Activated CD4-positive, alpha-beta T cell treated with anti-CD3 and anti-CD28 coated beads for 36 hours (primary cell): ENCODE measurements at regions of chr1 and their contacts with region 1.

Region 1: GRCh38 chr1:110645821-110646735 is 28.7 kb downstream of the KCNA3 start:
- DNase-seq: no peak
- ATAC-seq: peak; percentile 52
- H3K4me3 Mint-ChIP-seq: peak overlapping the region; percentile 25
- H3K27ac Mint-ChIP-seq: no peak overlapping the region
- H3K4me1 Mint-ChIP-seq: peaks cover 41% of the 10 kb centered on the region
- H3K27me3 Mint-ChIP-seq: no peaks in the 10 kb centered on the region

Region 2: DNA sequence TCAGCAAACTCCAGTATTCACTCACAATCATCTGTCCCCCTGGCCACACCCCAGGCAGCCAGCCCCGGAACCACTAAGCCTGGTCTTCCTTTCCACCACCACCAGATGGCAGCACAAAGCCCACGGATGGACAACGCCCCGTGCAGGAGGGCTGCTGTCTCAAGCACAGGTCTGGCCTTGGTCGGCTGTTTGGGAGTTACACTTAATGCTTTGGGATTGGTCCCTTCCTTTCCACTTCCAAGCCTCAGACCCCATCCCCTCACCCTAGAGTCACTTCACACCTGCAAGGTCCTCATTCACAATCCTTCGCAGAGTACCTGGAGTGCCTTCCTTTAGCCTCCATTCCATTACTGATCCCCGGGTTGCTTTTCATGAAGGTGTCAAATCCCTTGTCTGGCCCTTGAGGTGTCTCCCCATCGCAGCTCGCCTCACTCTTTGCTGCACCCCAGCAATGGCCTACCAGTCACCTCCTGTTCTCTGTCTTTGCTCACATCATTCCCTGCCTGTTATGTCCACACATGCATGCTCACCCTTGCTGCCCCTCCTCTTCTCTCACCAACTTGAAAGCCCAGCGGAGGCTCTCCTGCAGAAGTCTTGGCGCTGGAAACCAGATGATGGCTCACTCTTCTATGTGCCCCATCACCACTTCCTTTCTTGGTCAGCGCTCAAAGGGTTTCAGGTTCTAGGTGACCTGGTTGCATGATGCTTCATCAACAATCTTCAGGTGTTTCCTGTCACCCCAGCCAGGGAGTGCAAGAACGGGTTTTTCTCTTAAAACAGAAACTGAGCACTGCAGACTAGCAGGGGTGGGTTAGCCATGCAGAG is 15.0 kb before region 1 on chr1:
- CTCF ChIA-PET with region 1: interaction called, 111 read pairs
- POLR2A ChIA-PET with region 1: interaction called, 54 read pairs
- intact Hi-C with region 1: loop called (anchors 1 kb)
- DNase-seq: peak; percentile 93
- ATAC-seq: peak; percentile 76
- H3K4me3 Mint-ChIP-seq: no peak overlapping the region
- H3K27ac Mint-ChIP-seq: no peak overlapping the region
- H3K4me1 Mint-ChIP-seq: peaks cover 55% of the 10 kb centered on the region
- H3K27me3 Mint-ChIP-seq: no peaks in the 10 kb centered on the region

Region 3: GRCh38 chr1:110668549-110668948 is 22.5 kb after region 1 on chr1:
- CTCF ChIA-PET with region 1: interaction called, 8 read pairs
- POLR2A ChIA-PET with region 1: interaction called, 38 read pairs
- intact Hi-C with region 1: loop called (anchors 1 kb)
- DNase-seq: peak; percentile 17
- ATAC-seq: no peak
- H3K4me3 Mint-ChIP-seq: peak overlapping the region; percentile 63
- H3K27ac Mint-ChIP-seq: peak overlapping the region; percentile 44
- H3K4me1 Mint-ChIP-seq: peaks cover 44% of the 10 kb centered on the region
- H3K27me3 Mint-ChIP-seq: no peaks in the 10 kb centered on the region

Region 4: DNA sequence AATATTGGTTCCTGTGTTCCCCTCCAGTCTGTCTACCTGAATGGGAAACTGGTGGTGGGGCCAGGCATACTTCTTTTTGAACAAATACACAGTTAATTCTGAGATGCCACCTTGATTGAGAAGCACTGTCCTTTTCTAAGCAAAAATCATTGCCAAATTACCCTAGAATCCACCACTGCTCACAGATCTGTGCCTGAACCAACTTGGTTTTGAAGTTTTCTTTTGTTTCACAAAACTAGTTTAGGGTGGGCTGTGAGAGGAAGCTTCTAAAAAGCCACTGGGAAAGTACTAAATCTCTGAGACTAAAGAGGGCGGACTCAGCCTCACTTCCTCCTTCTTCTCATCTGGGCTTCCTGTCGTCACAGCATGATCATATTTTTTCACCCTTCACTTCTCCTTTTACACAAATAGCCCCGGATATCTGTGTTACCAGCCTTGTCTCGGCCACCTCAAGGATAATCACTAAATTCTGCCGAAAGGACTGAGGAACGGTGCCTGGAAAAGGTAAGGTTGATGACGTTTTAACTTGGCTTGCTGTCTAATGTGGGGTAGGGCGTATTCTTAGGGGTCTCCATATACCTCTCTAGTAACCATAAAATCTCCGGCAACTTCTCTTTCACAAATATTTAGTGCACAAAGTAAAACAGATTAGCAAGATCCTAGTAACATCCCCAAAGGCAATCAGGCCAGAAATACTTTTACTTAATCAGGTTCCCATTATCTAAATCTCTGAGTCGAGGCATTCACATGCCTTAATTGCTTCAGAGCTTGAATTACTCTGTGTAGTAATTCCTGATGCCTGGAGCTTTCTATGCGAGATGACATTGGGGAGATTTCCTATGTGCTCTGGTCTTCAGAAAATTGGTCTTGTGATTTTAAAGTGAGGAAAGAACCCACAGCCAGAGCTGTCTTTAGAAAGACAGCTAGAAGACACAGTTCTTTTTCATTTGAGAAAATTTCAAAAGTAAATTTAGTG is 227.0 kb after region 1 on chr1 and contains the start of gene CD53:
- CTCF ChIA-PET with region 1: no interaction called
- POLR2A ChIA-PET with region 1: interaction called, 4 read pairs
- intact Hi-C with region 1: loop called in 1 of 2 experiments (anchors 1 kb)
- DNase-seq: peak; percentile 62
- ATAC-seq: peak; percentile 33
- H3K4me3 Mint-ChIP-seq: peak within 1 kb of the TSS; percentile 85
- H3K27ac Mint-ChIP-seq: peak within 1 kb of the TSS; percentile 95
- H3K4me1 Mint-ChIP-seq: peaks cover 39% of the 10 kb centered on the region
- H3K27me3 Mint-ChIP-seq: no peaks in the 10 kb centered on the region
- total RNA-seq, gene CD53: 238 to 244 TPM

Region 5: DNA sequence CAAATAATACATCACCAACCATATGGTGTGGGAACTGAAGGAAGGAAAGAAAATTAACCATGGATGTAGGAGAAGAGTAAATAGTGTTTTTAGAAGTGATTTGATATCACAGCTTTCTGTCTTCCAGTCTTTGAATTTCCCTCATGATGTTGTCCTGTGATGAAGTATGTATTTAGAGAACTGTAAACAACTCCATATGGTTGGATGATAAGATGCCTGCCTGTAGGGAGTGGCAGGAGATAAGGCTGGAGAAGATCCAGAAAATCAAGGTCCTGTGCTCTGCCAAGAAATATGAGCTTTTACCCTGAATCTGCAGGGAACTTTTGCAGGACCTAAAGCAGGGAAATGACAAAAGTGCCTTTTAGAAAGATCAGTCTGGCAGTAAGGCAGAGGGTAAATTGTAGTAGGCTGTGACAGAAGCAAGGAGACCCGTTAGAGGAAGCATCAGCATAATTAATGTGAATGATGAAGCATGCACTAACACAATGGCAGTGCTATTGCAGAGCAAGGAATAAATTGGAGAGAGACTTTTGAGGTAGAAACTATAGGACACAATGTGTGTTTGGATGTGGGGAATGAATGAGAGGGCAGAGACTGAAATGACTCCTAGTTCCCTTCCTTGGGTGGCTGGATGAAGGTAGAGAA is 515.9 kb after region 1 on chr1:
- CTCF ChIA-PET with region 1: no interaction called
- POLR2A ChIA-PET with region 1: no interaction called
- intact Hi-C with region 1: no loop called
- DNase-seq: no peak
- ATAC-seq: no peak
- H3K4me3 Mint-ChIP-seq: no peak overlapping the region
- H3K27ac Mint-ChIP-seq: peak overlapping the region; percentile 40
- H3K4me1 Mint-ChIP-seq: peaks cover 13% of the 10 kb centered on the region
- H3K27me3 Mint-ChIP-seq: no peaks in the 10 kb centered on the region

Region 6: GRCh38 chr1:111214074-111214801 is 568.2 kb after region 1 on chr1:
- CTCF ChIA-PET with region 1: no interaction called
- POLR2A ChIA-PET with region 1: no interaction called
- intact Hi-C with region 1: loop called in 1 of 2 experiments (anchors 1 kb)
- DNase-seq: no peak
- ATAC-seq: peak; percentile 18
- H3K4me3 Mint-ChIP-seq: peak overlapping the region; percentile 68
- H3K27ac Mint-ChIP-seq: peak overlapping the region; percentile 97
- H3K4me1 Mint-ChIP-seq: peaks cover 80% of the 10 kb centered on the region
- H3K27me3 Mint-ChIP-seq: no peaks in the 10 kb centered on the region